Gastrocnemius medialis (tissue), 4 donors: ENCODE measurements at regions of chr14 and their contacts with region 1.

Region 1: DNA sequence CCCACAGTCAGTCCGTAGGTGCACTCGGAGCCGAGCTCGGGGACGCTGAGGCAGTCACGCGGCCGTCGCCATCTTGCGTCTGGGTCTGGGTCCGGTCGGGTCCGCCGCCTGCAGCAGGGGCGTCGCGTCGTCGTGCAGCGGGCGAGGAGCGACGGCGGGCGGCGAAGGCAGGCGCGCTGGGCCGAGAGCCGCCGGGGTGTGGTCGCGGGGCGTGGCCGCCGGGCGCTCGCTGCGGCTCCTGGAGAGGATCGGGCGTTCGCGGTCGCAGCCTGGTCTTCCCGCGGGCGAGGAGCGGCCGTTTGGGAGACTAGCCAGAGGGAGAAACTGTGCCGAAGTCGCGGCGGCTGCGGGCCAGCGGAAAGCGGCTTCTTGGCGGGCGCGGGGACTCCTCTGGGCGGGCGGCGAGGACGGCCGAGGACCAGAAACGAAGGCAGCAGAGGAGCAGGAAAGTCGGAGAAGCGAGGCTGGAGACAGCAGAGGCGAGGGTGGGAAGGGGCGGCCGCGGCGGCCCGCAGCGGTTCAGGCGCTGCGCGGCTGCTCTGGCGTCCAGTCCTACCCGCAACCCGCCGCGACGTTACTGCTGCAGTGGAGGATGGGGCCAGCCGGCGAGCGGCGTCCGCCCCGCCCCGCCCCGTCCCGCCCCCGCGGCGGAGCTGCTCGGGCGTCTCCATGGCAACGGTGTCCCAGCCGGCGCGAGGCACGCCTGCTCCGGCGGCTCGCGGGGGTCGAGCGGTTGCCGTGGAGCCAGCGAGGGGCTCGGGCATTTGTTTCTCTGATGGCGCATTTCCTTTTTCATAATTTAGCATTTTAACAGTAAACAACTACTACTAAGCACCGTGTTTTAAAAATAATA is at the start of gene PNMA1:
- DNase-seq: peak; percentile 78 to 81
- ATAC-seq: peak; percentile 78 to 84
- H3K4me3 ChIP-seq: peak within 1 kb of the TSS; percentile 72 to 87 (median 80)
- H3K27ac ChIP-seq: peak within 1 kb of the TSS; percentile 81 to 93 (median 82)
- H3K4me1 ChIP-seq: peaks cover 16 to 21% of the 10 kb centered on the region in 2 donors
- H3K27me3 ChIP-seq: no peaks in the 10 kb centered on the region
- CTCF ChIP-seq: no peak
- POLR2A ChIP-seq: peak; percentile 71 to 84
- total RNA-seq, gene PNMA1: 7.6 to 18.5 (median 8.8) TPM

Region 2: DNA sequence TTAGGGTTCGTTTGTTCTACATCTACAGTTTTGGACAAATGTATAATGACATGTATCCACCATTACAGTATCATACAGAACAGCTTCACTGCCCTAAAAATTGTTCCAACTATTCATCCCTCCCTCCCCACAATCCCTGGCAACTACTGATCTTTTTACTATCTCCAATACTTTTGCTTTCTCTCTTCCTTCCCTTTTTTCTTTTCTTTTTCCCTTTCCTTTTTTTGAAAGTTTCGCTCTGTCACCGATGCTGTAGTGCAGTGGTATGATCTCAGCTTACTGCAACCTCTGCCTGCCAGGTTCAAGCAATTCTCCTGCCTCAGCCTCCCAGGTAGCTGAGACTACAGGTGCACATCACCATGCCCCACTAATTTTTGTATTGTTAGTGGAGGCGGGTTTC is 124.9 kb before region 1 on chr14:
- in situ Hi-C with region 1: no loop called
- intact Hi-C with region 1: no loop called
- DNase-seq: no peak
- ATAC-seq: no peak
- H3K4me3 ChIP-seq: no peak overlapping the region
- H3K27ac ChIP-seq: no peak overlapping the region
- H3K4me1 ChIP-seq: no peaks in the 10 kb centered on the region
- H3K27me3 ChIP-seq: no peaks in the 10 kb centered on the region
- CTCF ChIP-seq: no peak
- POLR2A ChIP-seq: no peak

Region 3: DNA sequence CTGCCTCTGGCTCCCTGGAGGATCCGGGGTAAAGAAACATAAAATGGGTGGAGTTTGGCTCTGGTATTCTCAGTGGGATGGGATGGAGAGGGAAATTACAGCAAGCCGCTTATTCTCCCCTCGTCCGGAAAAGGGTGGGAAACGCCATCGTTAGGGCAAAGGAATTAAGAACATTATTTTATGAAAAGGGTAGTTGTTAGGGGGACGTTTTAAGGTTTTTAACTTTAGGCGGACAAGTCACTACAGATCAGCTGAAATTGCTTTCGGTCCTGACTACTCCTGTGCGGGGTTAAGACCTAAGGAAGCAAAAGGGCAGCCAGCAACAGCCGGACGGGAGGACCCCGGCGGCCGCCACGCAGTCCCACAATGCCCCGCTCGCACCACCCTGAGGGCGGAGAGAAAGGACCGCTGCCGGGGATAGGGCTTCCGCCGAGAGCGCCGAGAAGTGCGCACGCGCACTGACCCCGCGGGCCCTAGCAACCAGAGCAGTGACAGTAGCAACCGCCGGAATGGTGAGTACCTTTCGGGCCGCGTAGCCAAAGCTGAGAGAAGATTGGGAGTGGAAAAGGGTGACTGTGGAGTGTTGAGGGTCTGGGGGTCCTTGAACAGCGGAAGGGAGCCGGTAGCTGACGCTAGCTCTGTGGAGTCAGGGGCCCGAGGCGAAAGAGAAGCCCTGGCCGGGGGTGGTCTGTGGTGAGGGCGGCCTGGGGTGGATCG is 69.3 kb before region 1 on chr14 and contains the start of gene DNAL1:
- in situ Hi-C with region 1: loop called in 1 of 4 experiments (anchors 10 kb)
- intact Hi-C with region 1: loop called (anchors 2 kb)
- DNase-seq: peak; percentile 79 to 90
- ATAC-seq: peak; percentile 97 to 99
- H3K4me3 ChIP-seq: peak within 1 kb of the TSS; percentile 85 to 92 (median 92)
- H3K27ac ChIP-seq: peak within 1 kb of the TSS; percentile 84 to 94 (median 89)
- H3K4me1 ChIP-seq: peaks cover 11 to 17% of the 10 kb centered on the region in 2 donors
- H3K27me3 ChIP-seq: no peaks in the 10 kb centered on the region
- CTCF ChIP-seq: peak in 1 of 5 experiments; percentile 14
- POLR2A ChIP-seq: peak; percentile 37 to 49
- total RNA-seq, gene DNAL1: 6.4 to 8.2 (median 7.7) TPM

Region 4: DNA sequence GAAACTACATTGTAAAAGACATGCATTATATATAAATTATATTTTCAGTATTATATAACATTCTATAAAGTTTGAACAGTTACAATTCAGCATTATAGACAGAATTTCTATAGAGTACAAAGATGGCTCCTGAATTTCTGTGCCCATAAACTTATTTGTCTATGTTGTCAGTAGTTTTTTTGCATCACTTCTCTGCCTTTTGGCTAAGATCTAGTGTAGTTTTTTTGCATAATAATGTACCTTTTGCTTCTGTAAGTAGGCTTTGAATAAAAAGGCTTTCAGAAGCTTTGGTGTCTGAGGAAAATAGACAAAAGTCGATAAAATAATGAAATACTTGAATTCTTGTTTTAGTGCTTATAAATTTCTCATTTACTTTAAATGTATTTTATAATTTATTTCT is 58.2 kb before region 1 on chr14:
- in situ Hi-C with region 1: loop called in 1 of 4 experiments (anchors 10 kb)
- intact Hi-C with region 1: no loop called
- DNase-seq: no peak
- ATAC-seq: no peak
- H3K4me3 ChIP-seq: no peak overlapping the region
- H3K27ac ChIP-seq: no peak overlapping the region
- H3K4me1 ChIP-seq: no peaks in the 10 kb centered on the region
- H3K27me3 ChIP-seq: no peaks in the 10 kb centered on the region
- CTCF ChIP-seq: no peak
- POLR2A ChIP-seq: no peak